ENCODE measurements at regions of chr1 and their contacts with region 1.

Region 1: GRCh38 chr1:157948312-157949073 is 45.0 kb upstream of the KIRREL1 start:
- DNase-seq: peak; percentile 42
- H3K4me3 ChIP-seq: no peak overlapping the region
- H3K27ac ChIP-seq: no peak overlapping the region
- H3K4me1 ChIP-seq: no peaks in the 10 kb centered on the region
- H3K27me3 ChIP-seq: no peaks in the 10 kb centered on the region
- CTCF ChIP-seq: peak; percentile 42

Region 2: GRCh38 chr1:157773493-157774350 is 174.8 kb before region 1 on chr1:
- intact Hi-C with region 1: loop called (anchors 10 kb)
- DNase-seq: peak; percentile 70
- H3K4me3 ChIP-seq: no peak overlapping the region
- H3K27ac ChIP-seq: peak overlapping the region; percentile 71
- H3K4me1 ChIP-seq: peaks cover 5% of the 10 kb centered on the region
- H3K27me3 ChIP-seq: no peaks in the 10 kb centered on the region
- CTCF ChIP-seq: peak; percentile 56

Region 3: DNA sequence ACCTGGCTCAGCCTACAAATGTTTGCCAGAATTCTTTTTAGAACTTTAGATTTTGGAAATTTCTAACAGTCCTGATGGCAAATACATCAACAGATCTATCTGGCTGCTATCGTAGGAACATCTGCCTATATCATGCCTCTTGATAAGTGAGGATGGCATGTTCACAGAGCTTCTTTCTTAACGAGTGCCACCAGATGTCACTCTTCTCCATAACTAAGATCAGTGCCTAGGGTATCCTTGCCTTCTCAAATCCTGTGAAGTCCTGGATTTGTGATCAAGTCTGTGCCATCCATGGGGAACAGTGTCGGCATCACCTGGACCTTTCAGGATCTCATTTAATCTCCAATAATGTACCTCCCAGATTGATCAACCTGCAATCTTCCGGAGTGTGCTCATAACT is 70.4 kb before region 1 on chr1:
- intact Hi-C with region 1: loop called (anchors 2 kb)
- DNase-seq: no peak
- H3K4me3 ChIP-seq: no peak overlapping the region
- H3K27ac ChIP-seq: no peak overlapping the region
- H3K4me1 ChIP-seq: no peaks in the 10 kb centered on the region
- H3K27me3 ChIP-seq: no peaks in the 10 kb centered on the region
- CTCF ChIP-seq: peak; percentile 25